HAP-1 (cell line): ENCODE measurements at regions of chr2 and their contacts with region 1.

Region 1: GRCh38 chr2:240143801-240144648 is 3.6 kb upstream of the OTOS start:
- DNase-seq: peak; percentile 43 to 88
- H3K4me3 ChIP-seq: no peak overlapping the region
- H3K4me1 ChIP-seq: no peaks in the 10 kb centered on the region
- H3K27me3 ChIP-seq: no peaks in the 10 kb centered on the region

Region 2: GRCh38 chr2:240060977-240061591 is 82.9 kb before region 1 on chr2:
- in situ Hi-C with region 1: loop called (anchors 5 kb)
- DNase-seq: peak; percentile 45 to 61
- H3K4me3 ChIP-seq: no peak overlapping the region
- H3K4me1 ChIP-seq: peaks cover 10% of the 10 kb centered on the region
- H3K27me3 ChIP-seq: peaks cover 14% of the 10 kb centered on the region